Activated naive CD4-positive, alpha-beta T cell treated with anti-CD3 and anti-CD28 coated beads for 36 hours (primary cell): ENCODE measurements at regions of chr19 and their contacts with region 1.

Region 1: DNA sequence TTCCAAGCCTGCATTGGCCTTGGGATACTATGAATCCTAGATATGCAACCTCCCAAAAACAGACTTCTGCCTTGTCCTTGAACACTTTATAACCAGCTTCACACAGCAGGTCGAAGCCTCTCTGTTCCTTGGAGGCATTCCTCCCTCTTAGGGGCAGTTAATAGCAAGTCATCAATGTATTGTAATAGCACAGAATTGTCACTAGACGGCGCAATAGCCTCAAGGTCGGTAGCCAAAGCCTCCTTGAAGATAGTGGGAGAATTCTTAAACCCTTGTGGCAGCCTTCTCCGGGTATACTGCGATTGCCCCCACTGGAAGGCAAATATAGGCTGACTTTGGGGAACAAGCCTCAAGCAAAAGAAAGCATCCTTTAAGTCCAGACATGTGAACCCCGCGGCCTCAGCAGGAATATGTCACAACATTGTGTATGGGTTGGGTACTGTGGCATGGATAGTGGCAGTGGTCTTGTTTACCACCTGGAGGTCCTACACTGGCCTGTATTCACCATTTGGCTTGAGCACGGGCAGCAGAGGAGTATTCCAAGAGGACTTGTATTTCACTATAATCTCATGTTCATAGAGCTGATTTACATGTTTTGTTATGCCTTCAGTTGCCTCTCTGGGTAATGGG is 61.1 kb downstream of the ZNF431 start:
- DNase-seq: peak; percentile 48
- H3K4me3 Mint-ChIP-seq: no peak overlapping the region
- H3K27ac Mint-ChIP-seq: no peak overlapping the region
- H3K4me1 Mint-ChIP-seq: no peaks in the 10 kb centered on the region
- H3K27me3 Mint-ChIP-seq: peaks cover 10% of the 10 kb centered on the region

Region 2: GRCh38 chr19:21101521-21102242 is 101.3 kb before region 1 on chr19:
- CTCF ChIA-PET with region 1: no interaction called
- intact Hi-C with region 1: no loop called
- DNase-seq: no peak
- H3K4me3 Mint-ChIP-seq: no peak overlapping the region
- H3K27ac Mint-ChIP-seq: no peak overlapping the region
- H3K4me1 Mint-ChIP-seq: no peaks in the 10 kb centered on the region
- H3K27me3 Mint-ChIP-seq: no peaks in the 10 kb centered on the region

Region 3: DNA sequence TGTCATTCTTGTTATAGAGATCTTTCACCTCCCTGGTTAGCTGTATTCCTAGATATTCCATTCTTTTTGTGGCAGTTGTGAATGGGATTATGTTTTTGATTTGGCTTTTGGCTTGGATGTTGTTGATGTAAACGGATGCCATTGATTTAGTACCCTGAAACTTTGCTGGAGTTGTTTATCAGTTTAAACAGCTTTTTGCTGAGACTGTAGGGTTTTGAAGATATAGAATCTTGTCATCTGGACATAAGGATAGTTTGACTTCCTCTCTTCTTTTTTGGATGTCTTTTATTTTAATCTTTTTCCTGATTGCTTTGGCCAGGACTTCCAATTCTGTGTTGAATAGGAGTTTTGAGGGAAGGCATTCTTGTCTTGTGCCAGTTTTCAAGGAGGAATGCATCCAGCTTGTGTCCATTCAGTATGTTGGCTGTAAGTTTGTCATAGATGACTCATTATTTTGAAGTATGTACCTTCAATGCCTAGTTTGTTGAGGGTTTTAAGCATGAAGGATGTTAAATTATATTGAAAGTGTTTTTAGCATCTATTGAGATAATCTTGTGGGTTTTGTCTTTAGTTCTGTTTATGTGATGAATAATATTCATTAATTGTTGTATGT is 44.4 kb before region 1 on chr19:
- CTCF ChIA-PET with region 1: no interaction called
- intact Hi-C with region 1: no loop called
- DNase-seq: no peak
- H3K4me3 Mint-ChIP-seq: no peak overlapping the region
- H3K27ac Mint-ChIP-seq: no peak overlapping the region
- H3K4me1 Mint-ChIP-seq: peaks cover 15% of the 10 kb centered on the region
- H3K27me3 Mint-ChIP-seq: no peaks in the 10 kb centered on the region

Region 4: DNA sequence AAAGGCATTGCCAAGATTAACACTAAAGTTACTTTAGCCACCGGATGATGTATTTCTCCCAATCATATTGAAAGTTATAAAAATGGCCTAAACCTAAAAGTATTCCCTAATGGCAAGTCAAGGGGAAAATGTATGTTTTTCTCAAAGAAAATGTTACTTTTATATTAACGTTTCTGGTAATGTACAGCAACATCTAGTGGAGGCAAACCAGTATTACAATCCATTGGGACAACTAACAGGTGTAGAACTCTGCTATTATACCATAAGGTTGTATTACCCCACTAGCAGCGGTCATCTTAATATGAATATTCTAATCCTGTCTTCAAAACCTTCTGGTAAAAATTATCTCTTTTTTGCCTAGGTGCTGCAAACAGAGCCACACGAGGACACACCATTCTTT is 495.2 kb after region 1 on chr19:
- CTCF ChIA-PET with region 1: interaction called, 3 read pairs
- intact Hi-C with region 1: loop called (anchors 1 kb)
- DNase-seq: no peak
- H3K4me3 Mint-ChIP-seq: no peak overlapping the region
- H3K27ac Mint-ChIP-seq: no peak overlapping the region
- H3K4me1 Mint-ChIP-seq: no peaks in the 10 kb centered on the region
- H3K27me3 Mint-ChIP-seq: no peaks in the 10 kb centered on the region

Region 5: GRCh38 chr19:21891081-21891480 is 688.1 kb after region 1 on chr19:
- CTCF ChIA-PET with region 1: no interaction called
- intact Hi-C with region 1: loop called (anchors 10 kb)
- DNase-seq: no peak
- H3K4me3 Mint-ChIP-seq: no peak overlapping the region
- H3K27ac Mint-ChIP-seq: no peak overlapping the region
- H3K4me1 Mint-ChIP-seq: no peaks in the 10 kb centered on the region
- H3K27me3 Mint-ChIP-seq: peaks cover 3% of the 10 kb centered on the region

Region 6: DNA sequence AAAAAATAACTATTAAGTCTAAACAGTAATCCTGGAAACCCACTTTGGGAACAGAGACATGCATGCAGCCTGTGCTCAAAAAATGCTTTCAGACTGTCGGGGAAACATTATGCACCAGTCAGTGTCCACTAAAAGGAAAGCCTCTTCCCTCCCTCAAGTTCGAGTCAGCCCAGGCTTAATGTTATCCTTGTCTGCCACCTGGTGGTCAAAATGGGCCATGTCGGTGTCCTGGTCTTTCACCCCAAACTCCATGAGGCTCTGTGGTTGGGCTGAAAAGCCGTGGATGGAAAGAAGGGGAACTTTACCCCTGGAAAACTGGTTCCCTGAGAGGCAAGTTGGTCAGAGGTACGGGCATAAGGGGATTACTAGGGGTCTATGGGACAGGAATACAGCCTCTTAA is 1342.8 kb after region 1 on chr19:
- CTCF ChIA-PET with region 1: no interaction called
- intact Hi-C with region 1: loop called (anchors 10 kb)
- DNase-seq: peak; percentile 59
- H3K4me3 Mint-ChIP-seq: no peak overlapping the region
- H3K27ac Mint-ChIP-seq: no peak overlapping the region
- H3K4me1 Mint-ChIP-seq: no peaks in the 10 kb centered on the region
- H3K27me3 Mint-ChIP-seq: peaks cover 4% of the 10 kb centered on the region